HCT116 (cell line): ENCODE measurements at regions of chr12 and their contacts with region 1.

Region 1: GRCh38 chr12:5022465-5023061 is 21.1 kb upstream of the KCNA5 start:
- DNase-seq: peak; percentile 29
- ATAC-seq: peak; percentile 92
- H3K4me3 ChIP-seq: no peak overlapping the region
- H3K27ac ChIP-seq: no peak overlapping the region
- H3K4me1 ChIP-seq: no peaks in the 10 kb centered on the region
- H3K27me3 ChIP-seq: peaks cover 44% of the 10 kb centered on the region
- CTCF ChIP-seq: peak; percentile 53 to 94 (median 84); a peak in 5 of 6 replicates
- POLR2A ChIP-seq: no peak
- RAD21 ChIP-seq: peak; percentile 78

Region 2: GRCh38 chr12:5003020-5003666 is 19.4 kb before region 1 on chr12:
- CTCF ChIA-PET with region 1: no interaction called
- POLR2A ChIA-PET with region 1: no interaction called
- RAD21 ChIA-PET with region 1: no interaction called
- intact Hi-C with region 1: no loop called
- DNase-seq: peak; percentile 43
- ATAC-seq: peak; percentile 96
- H3K4me3 ChIP-seq: no peak overlapping the region
- H3K27ac ChIP-seq: no peak overlapping the region
- H3K4me1 ChIP-seq: peaks cover 0 to 3% of the 10 kb centered on the region in 2 experiments; a peak in 2 of 4 replicates
- H3K27me3 ChIP-seq: peaks cover 17% of the 10 kb centered on the region
- CTCF ChIP-seq: peak; percentile 82 to 98 (median 97)
- POLR2A ChIP-seq: no peak
- RAD21 ChIP-seq: peak; percentile 88

Region 3: DNA sequence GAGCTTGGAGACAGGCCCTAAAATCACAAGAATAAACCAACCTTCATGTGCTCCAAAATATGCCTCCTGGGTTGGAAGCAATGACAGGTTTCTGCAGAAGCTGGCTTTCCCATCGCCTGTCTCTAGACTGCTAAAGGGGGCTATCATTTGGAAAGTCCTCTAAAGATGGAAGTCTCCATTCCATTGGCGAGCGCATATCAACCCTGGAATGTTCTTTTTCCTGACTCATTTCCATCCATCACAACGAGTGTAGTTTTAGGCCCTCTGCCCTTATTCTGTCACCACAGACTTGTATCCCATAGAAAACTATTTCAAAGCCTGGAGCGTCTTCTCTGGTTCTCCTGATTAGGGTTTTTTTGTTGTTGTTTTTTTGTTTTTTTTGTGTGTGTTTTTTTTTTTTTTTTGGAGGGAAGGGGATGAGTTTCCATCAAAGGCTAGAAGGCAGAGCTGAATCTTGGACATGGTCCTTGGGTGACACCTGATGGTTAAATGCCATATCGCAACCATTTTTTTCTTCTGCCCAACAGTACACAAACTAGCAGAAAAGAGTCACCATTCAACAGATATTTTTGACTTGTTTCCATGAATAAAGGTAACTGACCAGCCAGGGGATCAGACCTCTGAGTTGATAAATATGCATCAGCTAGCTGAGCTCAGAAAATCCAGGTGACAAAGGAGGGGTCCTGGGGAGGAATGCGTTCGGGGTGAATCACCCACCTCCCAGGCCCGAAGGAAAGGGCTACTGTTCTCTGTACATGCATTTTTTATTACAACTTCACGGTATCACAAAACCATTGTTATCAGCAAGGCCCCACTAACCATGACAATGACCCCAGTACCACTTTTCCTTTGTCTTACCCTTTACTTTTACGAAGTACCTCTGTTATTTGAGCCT is 61.6 kb after region 1 on chr12:
- CTCF ChIA-PET with region 1: interaction called, 10 read pairs
- POLR2A ChIA-PET with region 1: no interaction called
- RAD21 ChIA-PET with region 1: no interaction called
- intact Hi-C with region 1: loop called (anchors 1 kb)
- DNase-seq: peak; percentile 28
- ATAC-seq: no peak
- H3K4me3 ChIP-seq: no peak overlapping the region
- H3K27ac ChIP-seq: no peak overlapping the region
- H3K4me1 ChIP-seq: peaks cover 0 to 9% of the 10 kb centered on the region in 2 experiments; a peak in 1 of 4 replicates
- H3K27me3 ChIP-seq: peaks cover 42% of the 10 kb centered on the region; the same call in 1 of the 2 replicates
- CTCF ChIP-seq: peak; percentile 48 to 74 (median 63); a peak in 5 of 6 replicates
- POLR2A ChIP-seq: no peak
- RAD21 ChIP-seq: peak; percentile 62

Region 4: DNA sequence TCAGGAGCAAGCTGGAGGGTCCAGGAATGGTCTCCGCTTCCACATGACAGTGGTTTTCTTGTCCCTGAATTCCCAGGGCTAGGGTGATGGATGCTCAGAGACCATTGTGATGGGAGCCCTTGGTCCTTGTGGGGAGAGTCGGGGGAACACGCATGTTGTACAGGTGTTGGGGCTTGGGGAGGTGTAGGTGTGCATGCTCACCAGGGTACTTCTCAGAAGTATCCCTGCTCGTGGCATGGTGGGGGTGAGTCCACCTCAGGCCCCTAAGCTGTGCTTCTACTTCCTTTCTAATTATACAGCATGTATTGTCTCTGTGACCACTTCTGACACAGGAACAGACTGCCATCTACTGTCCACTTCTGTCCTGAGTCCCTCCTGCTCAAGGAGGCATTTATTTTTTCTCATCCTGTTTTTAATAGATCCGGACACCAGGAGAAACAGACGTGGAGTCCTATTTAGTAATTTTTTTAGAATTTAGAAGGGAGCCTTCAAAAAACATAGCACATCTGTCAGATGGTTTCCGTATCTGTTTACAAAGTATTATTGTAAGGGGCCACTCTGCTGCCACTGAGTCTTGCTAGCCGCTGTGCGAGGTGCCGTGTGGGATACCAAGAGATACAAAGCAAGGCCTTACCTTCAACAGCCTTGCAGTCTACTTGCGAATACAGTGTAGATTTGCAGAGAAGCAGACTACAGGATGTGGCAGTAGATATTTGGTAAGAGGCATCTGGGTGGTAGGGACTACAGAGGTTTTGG is 419.9 kb after region 1 on chr12:
- CTCF ChIA-PET with region 1: no interaction called
- POLR2A ChIA-PET with region 1: no interaction called
- RAD21 ChIA-PET with region 1: no interaction called
- intact Hi-C with region 1: loop called (anchors 1 kb)
- DNase-seq: peak; percentile 39
- ATAC-seq: peak; percentile 90
- H3K4me3 ChIP-seq: no peak overlapping the region
- H3K27ac ChIP-seq: no peak overlapping the region
- H3K4me1 ChIP-seq: peaks cover 0 to 13% of the 10 kb centered on the region in 2 experiments; a peak in 3 of 4 replicates
- H3K27me3 ChIP-seq: peaks cover 44% of the 10 kb centered on the region
- CTCF ChIP-seq: peak; percentile 64 to 76 (median 75)
- POLR2A ChIP-seq: no peak
- RAD21 ChIP-seq: peak; percentile 85

Region 5: DNA sequence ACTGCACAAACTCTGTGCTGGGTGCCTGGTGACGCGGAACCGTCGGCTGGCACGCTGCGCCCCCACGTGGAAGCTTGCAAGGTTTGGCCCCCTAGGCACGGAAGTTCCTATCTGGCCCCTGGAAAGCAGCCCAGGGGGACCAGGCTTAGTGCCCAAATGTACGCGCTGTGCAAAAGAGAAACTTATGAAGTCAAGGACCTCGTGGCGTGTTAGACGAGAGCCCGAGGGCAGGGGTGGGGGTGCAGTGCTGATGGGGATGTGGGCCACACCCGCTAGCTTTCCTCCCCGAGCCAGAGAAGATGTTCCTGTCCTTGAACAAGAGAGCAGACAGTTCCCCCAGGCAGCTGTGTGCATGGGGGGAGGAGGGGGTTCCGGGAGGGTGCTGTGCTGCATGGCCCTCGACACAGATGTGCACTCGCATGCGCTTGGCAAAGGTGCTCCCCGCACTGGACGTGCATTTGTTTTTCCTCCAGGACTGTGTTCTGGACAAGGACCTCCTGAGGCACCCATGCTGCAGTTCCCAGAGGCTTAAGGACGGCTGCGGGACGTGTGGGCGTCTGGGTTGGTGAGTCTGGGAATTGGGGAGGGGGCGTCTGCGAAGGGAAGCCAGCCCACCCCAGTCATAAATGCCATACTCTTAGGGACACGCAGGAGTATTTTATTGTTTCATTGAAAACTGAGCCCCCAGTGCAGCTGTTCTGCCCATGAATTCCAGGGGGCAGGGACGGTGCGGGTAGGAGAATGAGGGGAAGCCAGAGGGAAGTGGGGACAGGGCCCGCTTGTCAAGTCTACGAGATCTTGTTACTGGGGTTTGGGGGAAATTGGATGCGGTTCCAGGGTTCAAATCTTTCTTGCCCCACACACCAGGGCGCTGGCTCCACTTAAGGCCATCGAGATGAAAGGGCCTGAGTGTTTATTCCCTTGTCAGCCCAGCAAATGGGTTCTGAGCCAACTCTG is 489.4 kb after region 1 on chr12:
- CTCF ChIA-PET with region 1: no interaction called
- POLR2A ChIA-PET with region 1: no interaction called
- RAD21 ChIA-PET with region 1: no interaction called
- intact Hi-C with region 1: loop called (anchors 2 kb)
- DNase-seq: peak; percentile 18
- ATAC-seq: peak; percentile 91
- H3K4me3 ChIP-seq: no peak overlapping the region
- H3K27ac ChIP-seq: no peak overlapping the region
- H3K4me1 ChIP-seq: no peaks in the 10 kb centered on the region; a peak in 1 of 4 replicates
- H3K27me3 ChIP-seq: no peaks in the 10 kb centered on the region; the same call in 1 of the 2 replicates
- CTCF ChIP-seq: peak; percentile 52 to 80 (median 75); a peak in 5 of 6 replicates
- POLR2A ChIP-seq: no peak
- RAD21 ChIP-seq: peak; percentile 59

Region 6: DNA sequence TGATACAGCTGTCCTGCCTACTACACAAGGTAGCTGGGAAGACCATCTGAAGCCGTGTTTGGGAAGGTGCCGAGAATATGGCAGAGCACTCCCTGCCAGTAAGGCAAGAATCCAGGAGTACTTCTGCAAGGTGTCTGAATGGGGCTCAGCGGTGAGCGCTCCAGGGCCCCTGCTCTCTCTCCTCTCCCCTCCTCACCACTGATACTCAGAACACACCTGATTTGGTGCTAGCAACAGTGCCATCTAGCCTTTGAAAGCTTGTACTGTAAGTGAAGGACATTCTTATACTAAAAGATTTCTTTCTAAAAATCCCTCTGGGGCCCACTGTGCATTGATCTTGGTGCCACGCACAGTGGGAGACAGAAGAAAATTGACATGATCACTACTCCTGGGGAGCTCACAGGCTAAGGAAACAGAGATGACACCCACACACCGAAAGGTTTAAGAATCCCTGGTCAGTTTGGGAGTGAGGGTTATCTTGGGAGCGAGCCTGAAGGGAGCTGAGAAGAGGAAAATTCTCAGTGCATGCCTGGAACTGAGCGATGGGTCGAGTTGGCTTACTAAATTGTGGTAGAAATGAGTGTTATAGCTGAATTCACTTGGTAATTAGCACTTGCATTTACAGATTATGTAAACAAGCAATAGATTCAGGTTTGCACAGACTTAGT is 626.3 kb after region 1 on chr12:
- CTCF ChIA-PET with region 1: no interaction called
- POLR2A ChIA-PET with region 1: no interaction called
- RAD21 ChIA-PET with region 1: no interaction called
- intact Hi-C with region 1: loop called (anchors 1 kb)
- DNase-seq: peak; percentile 4
- ATAC-seq: peak; percentile 92
- H3K4me3 ChIP-seq: no peak overlapping the region
- H3K27ac ChIP-seq: no peak overlapping the region
- H3K4me1 ChIP-seq: no peaks in the 10 kb centered on the region
- H3K27me3 ChIP-seq: peaks cover 56% of the 10 kb centered on the region
- CTCF ChIP-seq: peak; percentile 18 to 58 (median 58); a peak in 5 of 6 replicates
- POLR2A ChIP-seq: no peak
- RAD21 ChIP-seq: peak; percentile 44; the same call in 1 of the 2 replicates

Region 7: GRCh38 chr12:5796171-5796958 is 773.8 kb after region 1 on chr12:
- CTCF ChIA-PET with region 1: no interaction called
- POLR2A ChIA-PET with region 1: no interaction called
- RAD21 ChIA-PET with region 1: no interaction called
- intact Hi-C with region 1: loop called (anchors 5 kb)
- DNase-seq: no peak
- ATAC-seq: peak; percentile 98
- H3K4me3 ChIP-seq: no peak overlapping the region
- H3K27ac ChIP-seq: no peak overlapping the region
- H3K4me1 ChIP-seq: no peaks in the 10 kb centered on the region
- H3K27me3 ChIP-seq: no peaks in the 10 kb centered on the region; the same call in 1 of the 2 replicates
- CTCF ChIP-seq: peak; percentile 32 to 83 (median 69); a peak in 5 of 6 replicates
- POLR2A ChIP-seq: no peak
- RAD21 ChIP-seq: peak; percentile 75